ENCODE measurements at regions of chr5 and their contacts with region 1.

Region 1: DNA sequence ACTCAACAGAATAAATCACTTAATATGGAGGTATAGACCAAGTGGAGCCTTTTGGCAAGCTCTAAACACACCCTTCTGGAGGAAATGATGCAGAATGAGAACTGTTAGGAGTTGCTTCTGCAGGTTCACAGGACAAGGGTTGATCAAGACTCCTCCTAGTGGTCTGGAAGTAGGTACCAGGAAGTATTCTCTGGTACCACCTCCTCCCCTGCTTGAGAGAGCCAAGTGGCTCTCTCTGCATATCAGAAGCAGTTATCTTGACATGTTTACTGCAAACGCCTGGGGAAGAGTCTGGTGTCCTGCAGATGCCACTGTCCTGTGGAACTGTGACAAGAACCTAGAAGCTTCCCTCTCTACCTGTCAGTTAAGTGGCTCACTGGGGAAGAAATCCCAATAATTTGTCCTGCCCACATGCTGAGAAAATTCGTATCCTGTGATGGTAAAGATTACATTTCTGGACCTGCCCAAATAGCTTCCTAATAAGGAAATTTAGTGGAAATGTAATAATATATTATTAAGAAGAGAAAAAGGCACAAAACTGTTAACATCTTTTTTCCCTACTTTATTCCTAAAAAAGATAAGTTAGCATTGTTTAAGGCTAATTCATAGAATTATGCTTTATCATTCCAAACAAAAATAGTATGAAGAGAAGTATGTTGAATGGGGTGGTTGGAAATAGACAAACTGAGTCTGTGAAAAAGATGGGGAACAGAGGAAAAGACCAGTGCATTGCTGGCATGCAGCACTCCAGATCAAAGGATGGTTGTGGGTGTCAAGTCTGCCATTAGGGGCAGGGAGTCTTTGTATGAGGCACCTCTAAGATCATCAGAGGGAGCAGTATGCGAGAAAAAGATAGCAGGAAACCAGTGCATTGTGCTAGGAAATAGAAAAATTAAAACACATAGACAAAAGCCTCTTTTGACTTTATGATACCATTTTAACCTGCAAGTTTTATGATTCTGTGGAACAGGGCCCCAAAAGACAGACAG is 118.8 kb downstream of the CDC42SE2 start:
- DNase-seq: peak; percentile 58
- H3K4me3 Mint-ChIP-seq: peak overlapping the region; percentile 39
- H3K27ac Mint-ChIP-seq: peak overlapping the region; percentile 94
- H3K4me1 Mint-ChIP-seq: peaks cover 91% of the 10 kb centered on the region
- H3K27me3 Mint-ChIP-seq: no peaks in the 10 kb centered on the region

Region 2: GRCh38 chr5:131170540-131171275 is 212.0 kb before region 1 on chr5 and contains the start of gene LYRM7:
- CTCF ChIA-PET with region 1: interaction called, 7 read pairs
- POLR2A ChIA-PET with region 1: interaction called, 4 read pairs
- intact Hi-C with region 1: loop called (anchors 1 kb)
- DNase-seq: peak; percentile 98
- H3K4me3 Mint-ChIP-seq: peak within 1 kb of the TSS; percentile 97
- H3K27ac Mint-ChIP-seq: peak within 1 kb of the TSS; percentile 92
- H3K4me1 Mint-ChIP-seq: peaks cover 37% of the 10 kb centered on the region
- H3K27me3 Mint-ChIP-seq: no peaks in the 10 kb centered on the region
- total RNA-seq, gene LYRM7: 16.6 to 18.6 TPM

Region 3: GRCh38 chr5:131272307-131272706 is 110.4 kb before region 1 on chr5:
- CTCF ChIA-PET with region 1: interaction called, 11 read pairs
- POLR2A ChIA-PET with region 1: interaction called, 7 read pairs
- intact Hi-C with region 1: no loop called
- DNase-seq: no peak
- H3K4me3 Mint-ChIP-seq: peak overlapping the region; percentile 77
- H3K27ac Mint-ChIP-seq: peak overlapping the region; percentile 96
- H3K4me1 Mint-ChIP-seq: peaks cover 75% of the 10 kb centered on the region
- H3K27me3 Mint-ChIP-seq: no peaks in the 10 kb centered on the region

Region 4: GRCh38 chr5:131322926-131323325 is 59.8 kb before region 1 on chr5:
- CTCF ChIA-PET with region 1: interaction called, 4 read pairs
- POLR2A ChIA-PET with region 1: no interaction called
- intact Hi-C with region 1: loop called (anchors 1 kb)
- DNase-seq: no peak
- H3K4me3 Mint-ChIP-seq: peak overlapping the region; percentile 1
- H3K27ac Mint-ChIP-seq: peak overlapping the region; percentile 69
- H3K4me1 Mint-ChIP-seq: peaks cover 67% of the 10 kb centered on the region
- H3K27me3 Mint-ChIP-seq: no peaks in the 10 kb centered on the region

Region 5: GRCh38 chr5:131367219-131367860 is 15.4 kb before region 1 on chr5:
- CTCF ChIA-PET with region 1: interaction called, 15 read pairs
- POLR2A ChIA-PET with region 1: interaction called, 5 read pairs
- intact Hi-C with region 1: loop called (anchors 1 kb)
- DNase-seq: no peak
- H3K4me3 Mint-ChIP-seq: peak overlapping the region; percentile 10
- H3K27ac Mint-ChIP-seq: peak overlapping the region; percentile 65
- H3K4me1 Mint-ChIP-seq: peaks cover 70% of the 10 kb centered on the region
- H3K27me3 Mint-ChIP-seq: no peaks in the 10 kb centered on the region

Region 6: DNA sequence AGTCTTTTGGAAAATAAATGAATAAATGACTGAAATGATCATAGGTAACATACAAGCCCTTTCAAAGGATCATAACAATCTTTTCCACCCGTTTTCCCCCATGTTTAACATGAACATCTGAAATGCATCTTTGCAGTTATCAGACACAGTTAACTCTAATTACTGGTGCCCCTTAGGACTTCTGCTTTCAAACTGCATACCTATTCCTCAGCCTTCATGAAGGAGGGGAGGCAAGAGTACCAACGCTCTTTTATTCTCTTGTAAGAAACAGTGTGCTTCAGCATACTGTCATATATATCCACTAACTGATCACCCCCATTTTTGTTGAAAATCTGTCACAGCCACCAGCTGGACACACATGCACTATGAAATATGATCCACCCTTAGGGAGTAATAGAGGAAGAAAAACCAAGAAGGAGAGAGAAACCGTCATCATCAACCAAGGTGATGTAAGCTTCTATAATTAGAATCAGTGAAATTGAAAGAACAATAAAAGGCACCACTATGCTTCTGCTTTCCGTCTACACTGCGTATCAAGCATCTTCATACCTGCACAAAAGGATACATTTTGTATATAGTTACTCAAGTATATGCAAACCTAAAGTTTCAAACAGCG is 153.6 kb after region 1 on chr5:
- CTCF ChIA-PET with region 1: no interaction called
- POLR2A ChIA-PET with region 1: interaction called, 4 read pairs
- intact Hi-C with region 1: loop called (anchors 5 kb)
- DNase-seq: no peak
- H3K4me3 Mint-ChIP-seq: peak overlapping the region; percentile 31
- H3K27ac Mint-ChIP-seq: peak overlapping the region; percentile 55
- H3K4me1 Mint-ChIP-seq: peaks cover 85% of the 10 kb centered on the region
- H3K27me3 Mint-ChIP-seq: no peaks in the 10 kb centered on the region

Measured in activated CD4-positive, alpha-beta memory T cell treated with anti-CD3 and anti-CD28 coated beads for 36 hours (primary cell).